Activated naive CD4-positive, alpha-beta T cell treated with anti-CD3 and anti-CD28 coated beads for 36 hours (primary cell): ENCODE measurements at regions of chrX and their contacts with region 1.

Region 1: GRCh38 chrX:77962068-77962902 is 7.2 kb downstream of the PGAM4 start:
- DNase-seq: peak; percentile 14
- H3K4me3 Mint-ChIP-seq: peak overlapping the region; percentile 75
- H3K27ac Mint-ChIP-seq: peak overlapping the region; percentile 93
- H3K4me1 Mint-ChIP-seq: peaks cover 44% of the 10 kb centered on the region
- H3K27me3 Mint-ChIP-seq: no peaks in the 10 kb centered on the region

Region 2: DNA sequence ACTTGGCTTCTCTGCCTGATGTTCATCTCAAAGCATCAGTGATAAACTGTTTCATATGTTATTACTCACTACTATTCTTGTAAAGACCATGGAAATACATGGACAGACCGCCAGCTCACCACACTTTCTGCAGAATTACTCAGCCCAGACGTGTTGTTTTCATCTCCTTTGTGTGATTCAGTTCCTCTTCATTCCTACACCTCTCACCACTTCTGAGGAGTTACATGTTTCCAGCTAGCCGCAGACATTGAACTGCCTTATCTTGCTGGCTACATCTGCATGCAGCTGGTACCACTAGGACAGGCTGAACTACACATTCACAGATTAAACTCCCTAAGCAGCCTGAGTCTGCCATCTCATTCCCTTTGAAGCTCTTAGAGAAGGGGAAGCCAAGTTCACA is 958.3 kb before region 1 on chrX:
- CTCF ChIA-PET with region 1: no interaction called
- intact Hi-C with region 1: loop called (anchors 5 kb)
- DNase-seq: peak; percentile 72
- H3K4me3 Mint-ChIP-seq: no peak overlapping the region
- H3K27ac Mint-ChIP-seq: peak overlapping the region; percentile 75
- H3K4me1 Mint-ChIP-seq: peaks cover 16% of the 10 kb centered on the region
- H3K27me3 Mint-ChIP-seq: peaks cover 3% of the 10 kb centered on the region

Region 3: DNA sequence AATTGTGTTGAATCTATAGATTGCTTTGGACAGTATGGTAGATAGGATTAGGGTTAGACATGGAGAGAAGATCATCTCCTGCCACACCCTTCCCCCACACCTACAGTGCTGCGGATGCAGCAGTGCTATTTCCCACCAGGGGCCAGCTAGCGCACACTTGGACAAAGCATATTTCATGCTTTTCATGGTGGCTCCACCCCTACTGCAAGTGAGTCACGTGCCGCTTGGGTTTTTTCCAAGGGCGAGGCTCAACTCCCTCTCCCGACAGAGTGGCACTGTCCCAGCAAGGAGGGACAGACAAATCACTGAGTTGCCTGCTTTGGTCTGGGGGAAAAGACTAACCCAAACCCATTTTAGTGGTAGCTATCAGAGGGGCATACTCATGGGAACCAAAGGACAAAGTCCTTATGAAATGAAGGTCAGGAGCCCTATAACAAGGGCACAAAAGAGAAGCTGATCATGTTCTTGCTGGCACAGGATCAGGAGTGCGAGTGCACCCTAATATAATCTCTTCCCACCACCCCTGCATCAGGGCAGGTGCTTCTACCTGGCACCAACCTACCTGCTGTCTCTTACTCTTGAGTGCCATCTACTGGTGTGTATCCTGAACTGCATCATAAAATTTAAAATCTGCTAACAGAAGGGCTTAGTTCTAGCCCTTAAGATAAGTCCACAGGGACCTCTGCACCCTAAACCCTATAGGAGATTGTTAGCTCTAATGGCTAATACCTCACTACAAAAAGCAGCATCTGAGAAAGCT is 62.2 kb after region 1 on chrX:
- CTCF ChIA-PET with region 1: interaction called, 6 read pairs
- intact Hi-C with region 1: loop called (anchors 5 kb)
- DNase-seq: peak; percentile 8
- H3K4me3 Mint-ChIP-seq: no peak overlapping the region
- H3K27ac Mint-ChIP-seq: no peak overlapping the region
- H3K4me1 Mint-ChIP-seq: peaks cover 3% of the 10 kb centered on the region
- H3K27me3 Mint-ChIP-seq: no peaks in the 10 kb centered on the region

Region 4: DNA sequence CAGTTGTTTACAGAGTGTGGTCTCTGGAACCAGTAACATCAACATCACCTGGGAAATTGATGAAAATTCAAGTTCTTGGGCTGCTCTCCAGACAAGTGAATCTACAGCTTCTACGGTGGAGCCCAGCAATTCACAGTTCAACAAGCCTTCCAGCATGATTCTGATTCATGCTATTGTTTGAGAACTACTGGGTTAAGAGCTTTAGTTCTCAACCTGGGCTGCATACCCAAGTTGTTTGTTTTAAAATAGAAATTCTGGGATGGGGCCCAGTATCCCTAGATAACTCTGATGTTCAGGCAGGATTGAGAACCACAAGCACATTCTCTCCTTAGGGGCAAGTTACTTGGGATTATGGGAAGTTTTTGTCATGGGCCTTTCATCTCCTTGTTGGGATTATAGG is 103.8 kb after region 1 on chrX:
- CTCF ChIA-PET with region 1: no interaction called
- intact Hi-C with region 1: loop called (anchors 1 kb)
- DNase-seq: no peak
- H3K4me3 Mint-ChIP-seq: no peak overlapping the region
- H3K27ac Mint-ChIP-seq: no peak overlapping the region
- H3K4me1 Mint-ChIP-seq: peaks cover 14% of the 10 kb centered on the region
- H3K27me3 Mint-ChIP-seq: no peaks in the 10 kb centered on the region